PC-3 (cell line): ENCODE measurements at regions of chr15 and their contacts with region 1.

Region 1: DNA sequence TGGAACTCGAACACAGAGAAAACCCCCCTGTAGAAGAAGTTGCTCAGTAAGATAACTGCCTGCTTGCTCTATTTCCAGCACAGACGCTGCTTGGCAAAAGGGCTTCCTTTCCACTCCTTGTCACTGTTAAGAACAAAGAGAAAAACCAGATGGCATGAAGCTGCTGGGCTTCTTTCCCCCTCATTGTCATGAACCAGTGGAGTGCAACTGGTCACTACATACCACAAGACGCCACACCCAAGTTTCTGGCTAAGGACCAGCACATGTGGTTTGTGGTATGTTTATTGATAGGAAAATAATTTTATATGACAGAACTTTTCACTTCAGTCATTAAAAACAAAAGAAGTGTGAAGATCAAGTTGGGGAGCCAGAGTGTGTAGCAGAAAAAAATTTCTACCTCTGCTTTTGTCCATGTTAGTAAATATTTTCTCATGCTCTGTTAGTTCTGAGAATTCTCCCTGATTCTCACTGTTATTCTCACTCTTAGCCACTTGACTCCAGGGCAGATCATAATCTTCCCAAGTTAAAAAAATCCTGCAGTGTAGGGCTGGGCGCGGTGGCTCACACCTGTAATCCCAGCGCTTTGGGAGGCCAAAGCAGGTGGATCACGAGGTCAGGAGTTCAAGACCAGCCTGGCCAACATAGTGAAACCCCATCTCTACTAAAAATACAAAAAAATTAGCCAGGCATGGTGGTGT is 37.9 kb downstream of the CLK3 start:
- DNase-seq: peak; percentile 84
- ATAC-seq: peak; percentile 76
- H3K4me3 ChIP-seq: no peak overlapping the region
- H3K27ac ChIP-seq: peak overlapping the region; percentile 38
- H3K4me1 ChIP-seq: peaks cover 10% of the 10 kb centered on the region
- H3K27me3 ChIP-seq: no peaks in the 10 kb centered on the region
- CTCF ChIP-seq: no peak

Region 2: DNA sequence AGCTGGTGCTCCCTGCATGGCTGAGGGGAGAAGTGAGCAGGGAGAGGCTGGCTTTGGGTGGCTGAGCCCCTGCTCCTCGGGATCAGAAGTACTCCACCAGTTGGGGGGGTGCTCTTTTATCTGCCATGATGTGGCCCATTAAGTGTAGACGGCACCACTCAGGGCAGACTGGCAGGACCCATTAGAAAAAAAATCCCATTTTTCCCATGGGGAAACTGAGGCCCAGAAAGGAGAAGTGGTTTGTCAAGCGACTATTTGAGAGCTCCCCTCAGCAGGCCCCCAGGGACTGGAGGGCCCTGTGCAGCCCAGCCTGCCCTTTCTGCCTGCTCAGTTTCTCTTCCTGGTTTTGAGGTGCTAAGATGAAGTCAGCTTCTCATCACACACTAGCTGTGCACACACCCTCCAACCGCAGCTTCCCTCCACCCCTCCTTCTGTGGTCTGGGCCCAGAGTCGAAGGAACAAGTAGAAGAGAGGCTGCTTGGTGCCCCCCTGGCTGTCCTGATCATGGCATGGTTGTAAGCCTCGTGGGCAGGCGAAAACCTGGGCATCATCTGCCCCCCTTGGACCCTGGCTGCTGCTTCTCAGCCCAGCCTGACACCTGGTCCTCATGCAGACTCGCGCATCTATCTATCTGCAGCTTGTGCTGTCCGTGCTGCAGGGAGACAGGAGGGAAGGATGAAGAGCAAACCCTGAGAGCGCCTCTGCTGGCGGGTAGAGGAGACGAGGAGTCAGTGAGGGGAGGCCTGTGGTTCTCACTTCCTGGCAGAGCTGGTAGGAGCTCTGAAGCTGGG is 133.9 kb after region 1 on chr15:
- CTCF ChIA-PET with region 1: no interaction called
- POLR2A ChIA-PET with region 1: interaction called, 11 read pairs
- intact Hi-C with region 1: no loop called
- DNase-seq: no peak
- ATAC-seq: no peak
- H3K4me3 ChIP-seq: no peak overlapping the region
- H3K27ac ChIP-seq: no peak overlapping the region
- H3K4me1 ChIP-seq: peaks cover 24% of the 10 kb centered on the region
- H3K27me3 ChIP-seq: no peaks in the 10 kb centered on the region
- CTCF ChIP-seq: peak; percentile 28; the same call in 1 of the 2 replicates